GM12878 (cell line): ENCODE measurements at regions of chr22 and their contacts with region 1.

Region 1: DNA sequence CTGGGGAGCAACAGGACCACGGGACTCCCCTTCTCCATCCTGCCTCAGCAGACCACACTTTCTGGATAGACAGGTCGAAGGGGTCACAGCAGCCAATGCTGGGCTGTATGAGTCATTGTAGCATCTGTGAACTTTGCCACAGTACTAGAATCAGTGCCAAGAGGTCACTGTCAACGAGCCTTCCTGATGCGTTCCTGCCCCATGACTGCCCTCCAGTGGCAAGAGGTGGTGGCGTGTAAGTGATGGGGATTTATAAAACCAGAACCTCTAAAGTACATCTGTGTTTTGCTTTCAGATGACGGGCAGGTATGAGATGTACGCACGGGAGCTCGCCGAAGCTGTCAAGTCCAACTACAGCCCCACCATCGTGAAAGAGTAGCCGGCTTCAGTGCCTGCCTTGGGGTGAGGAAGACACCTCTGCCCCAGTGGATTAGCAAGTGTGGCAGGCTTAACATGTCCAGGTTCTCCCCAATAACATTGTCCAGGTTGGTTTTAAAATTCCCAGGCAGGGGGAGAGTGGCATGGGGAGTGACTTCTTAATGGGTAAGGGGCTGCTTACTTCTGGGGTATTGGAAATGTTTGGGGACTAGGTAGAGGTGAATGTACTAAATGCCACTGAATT is 29.4 kb downstream of the GUCD1 start:
- DNase-seq: peak; percentile 62
- ATAC-seq: peak; percentile 92
- H3K4me3 ChIP-seq: no peak overlapping the region
- H3K27ac ChIP-seq: no peak overlapping the region
- H3K4me1 ChIP-seq: peaks cover 10% of the 10 kb centered on the region
- H3K27me3 ChIP-seq: no peaks in the 10 kb centered on the region
- CTCF ChIP-seq: peak; percentile 89 to 94 (median 90)
- EP300 ChIP-seq: no peak
- POLR2A ChIP-seq: no peak
- RAD21 ChIP-seq: peak; percentile 96

Region 2: DNA sequence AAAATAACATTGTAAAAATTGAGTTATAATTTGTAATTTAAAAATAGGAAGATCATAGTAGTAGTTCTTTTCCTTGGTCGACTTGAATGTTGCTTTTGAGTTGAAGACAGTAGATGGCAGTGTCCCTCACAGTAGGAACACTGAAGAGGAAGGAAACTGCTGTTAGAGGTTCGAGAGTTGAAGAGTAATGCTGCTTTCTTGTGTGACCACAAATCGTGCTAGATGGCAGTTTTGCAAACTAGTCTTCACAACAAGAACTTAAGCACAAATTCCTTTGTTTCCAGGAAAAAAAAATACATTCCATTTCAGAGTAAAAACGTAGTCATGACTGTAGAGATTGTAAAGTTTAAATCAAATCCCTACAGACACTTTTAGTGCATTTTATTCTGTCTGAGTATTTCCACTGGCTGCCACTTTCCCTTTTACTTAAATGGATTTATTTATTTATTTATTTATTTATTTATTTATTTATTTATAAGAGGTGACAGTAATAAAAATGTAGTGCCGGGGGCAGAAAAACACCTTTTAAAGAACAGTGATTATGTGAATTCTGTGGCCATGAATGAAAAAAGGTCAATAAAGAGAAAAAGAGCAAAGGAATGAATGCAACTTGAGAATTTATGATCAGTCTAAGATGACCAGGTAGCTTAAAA is 200.3 kb before region 1 on chr22:
- CTCF ChIA-PET with region 1: interaction called, 62 read pairs
- POLR2A ChIA-PET with region 1: no interaction called
- RAD21 ChIA-PET with region 1: interaction called, 5 read pairs
- SMC1A ChIA-PET with region 1: interaction called, 13 read pairs
- in situ Hi-C with region 1: loop called (anchors 5 kb)
- intact Hi-C with region 1: loop called (anchors 1 kb)
- DNase-seq: peak; percentile 62
- ATAC-seq: peak; percentile 92
- H3K4me3 ChIP-seq: no peak overlapping the region
- H3K27ac ChIP-seq: peak overlapping the region; percentile 10; the same call in 1 of the 2 replicates
- H3K4me1 ChIP-seq: no peaks in the 10 kb centered on the region
- H3K27me3 ChIP-seq: no peaks in the 10 kb centered on the region
- CTCF ChIP-seq: peak; percentile 70 to 93 (median 75); a peak in 5 of 6 replicates
- EP300 ChIP-seq: no peak
- POLR2A ChIP-seq: no peak
- RAD21 ChIP-seq: peak; percentile 85

Region 3: DNA sequence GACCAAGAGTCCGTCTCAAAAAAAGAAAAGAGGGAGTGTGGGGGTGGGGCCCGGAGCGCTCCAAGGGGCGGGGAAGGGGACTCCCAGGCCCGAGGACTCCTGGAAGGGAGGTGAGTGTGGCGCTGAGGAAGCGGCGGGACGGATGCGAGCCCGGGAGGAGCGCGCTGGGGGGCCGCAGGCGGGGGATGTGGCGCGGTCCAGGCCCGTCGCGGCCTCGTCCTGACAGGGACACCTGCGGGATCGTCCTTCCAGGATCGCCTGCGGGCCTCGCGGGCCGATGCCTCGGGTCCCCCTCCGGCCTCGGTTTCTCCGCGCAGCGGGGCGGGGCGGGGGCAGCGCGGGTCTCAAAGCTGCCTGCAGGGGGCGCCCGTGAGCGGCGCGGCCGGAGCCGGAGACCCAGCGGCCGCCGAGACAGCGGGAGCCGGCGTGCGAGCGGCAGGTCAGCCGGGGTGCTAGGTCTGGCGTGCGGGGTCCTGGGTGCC is 102.0 kb before region 1 on chr22:
- CTCF ChIA-PET with region 1: interaction called, 71 read pairs
- POLR2A ChIA-PET with region 1: interaction called, 8 read pairs
- RAD21 ChIA-PET with region 1: interaction called, 23 read pairs
- SMC1A ChIA-PET with region 1: interaction called, 25 read pairs
- in situ Hi-C with region 1: no loop called
- intact Hi-C with region 1: loop called (anchors 1 kb)
- DNase-seq: no peak
- ATAC-seq: peak; percentile 64
- H3K4me3 ChIP-seq: peak overlapping the region; percentile 77; the same call in 1 of the 2 replicates
- H3K27ac ChIP-seq: no peak overlapping the region
- H3K4me1 ChIP-seq: peaks cover 19% of the 10 kb centered on the region
- H3K27me3 ChIP-seq: no peaks in the 10 kb centered on the region
- CTCF ChIP-seq: peak; percentile 62 to 86 (median 69); a peak in 5 of 6 replicates
- EP300 ChIP-seq: no peak
- POLR2A ChIP-seq: no peak; the same call in 1 of the 2 replicates
- RAD21 ChIP-seq: peak; percentile 73

Region 4: DNA sequence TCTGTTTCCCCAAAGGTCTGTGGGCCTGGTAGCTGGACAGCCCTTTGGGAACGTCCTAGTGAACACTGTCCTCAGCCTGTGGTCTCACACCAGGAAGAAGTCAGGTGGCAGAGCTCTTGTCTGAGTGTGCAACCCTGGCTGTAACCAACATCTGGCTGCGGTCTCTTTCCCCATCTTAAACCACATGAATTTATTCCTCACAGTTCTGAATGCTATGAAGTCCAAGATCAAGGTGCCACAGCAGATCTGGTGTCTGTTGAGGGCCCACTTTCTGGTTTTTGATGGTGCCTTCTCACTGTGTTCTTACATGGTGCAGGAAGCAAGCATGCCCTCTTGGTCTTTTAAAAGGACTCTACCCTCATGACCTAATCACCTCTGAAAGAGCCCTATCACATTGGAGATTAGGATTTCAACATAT is 27.7 kb before region 1 on chr22:
- CTCF ChIA-PET with region 1: interaction called, 213 read pairs
- POLR2A ChIA-PET with region 1: interaction called, 11 read pairs
- RAD21 ChIA-PET with region 1: interaction called, 64 read pairs
- SMC1A ChIA-PET with region 1: interaction called, 113 read pairs
- in situ Hi-C with region 1: no loop called
- intact Hi-C with region 1: no loop called
- DNase-seq: no peak
- ATAC-seq: no peak
- H3K4me3 ChIP-seq: no peak overlapping the region
- H3K27ac ChIP-seq: no peak overlapping the region
- H3K4me1 ChIP-seq: peaks cover 4% of the 10 kb centered on the region
- H3K27me3 ChIP-seq: no peaks in the 10 kb centered on the region; a peak in 1 of 4 replicates
- CTCF ChIP-seq: no peak
- EP300 ChIP-seq: no peak
- POLR2A ChIP-seq: no peak
- RAD21 ChIP-seq: no peak

Region 5: DNA sequence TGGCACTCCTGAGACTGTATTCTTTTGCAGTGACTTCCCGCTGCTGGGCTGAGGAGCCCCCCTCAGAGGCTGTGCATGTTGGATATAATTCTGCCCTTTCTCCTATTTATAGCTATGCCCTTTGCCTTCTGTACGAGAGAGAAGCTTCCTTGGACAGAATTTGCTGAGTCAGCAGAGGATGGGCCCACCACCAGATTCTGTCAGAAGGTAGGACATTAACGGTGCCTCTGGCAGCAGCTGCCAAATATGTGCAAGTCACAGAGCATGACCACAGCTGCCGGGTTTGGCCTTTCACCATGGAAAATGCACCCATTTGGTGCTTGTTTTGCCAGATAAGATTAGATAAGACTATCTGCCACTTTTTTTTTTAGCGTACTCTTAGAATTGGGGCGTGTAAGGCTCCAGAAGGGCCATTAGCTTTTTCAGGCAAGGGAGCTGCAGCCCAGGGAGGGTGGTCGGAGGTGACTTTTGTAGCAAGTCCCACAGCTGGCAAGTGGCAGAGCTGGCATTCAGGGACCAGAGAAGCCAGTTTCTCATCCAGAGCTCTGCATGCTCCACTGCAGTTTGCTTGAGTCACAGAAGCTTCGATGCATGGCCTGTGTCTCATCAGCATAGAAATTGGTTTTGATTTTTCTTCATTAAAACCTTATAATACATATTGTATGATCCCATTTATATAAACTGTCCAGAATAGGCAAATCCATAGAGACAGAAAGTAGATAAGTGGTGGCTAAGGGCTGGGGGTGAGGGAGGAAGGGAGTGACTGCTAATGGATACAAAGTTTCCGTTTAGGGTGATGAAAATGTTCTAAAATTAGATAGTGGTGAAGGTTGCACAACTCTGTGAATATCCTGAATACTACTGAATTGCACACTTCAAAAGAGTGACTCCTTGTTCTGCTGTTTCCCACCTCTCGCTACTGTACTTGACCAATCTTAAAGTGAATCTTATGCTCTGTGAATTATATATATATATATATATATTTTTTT is 14.6 kb before region 1 on chr22:
- CTCF ChIA-PET with region 1: interaction called, 213 read pairs
- POLR2A ChIA-PET with region 1: interaction called, 14 read pairs
- RAD21 ChIA-PET with region 1: interaction called, 64 read pairs
- SMC1A ChIA-PET with region 1: interaction called, 113 read pairs
- in situ Hi-C with region 1: no loop called
- intact Hi-C with region 1: no loop called
- DNase-seq: no peak
- ATAC-seq: peak; percentile 5; the same call in 2 of the 3 replicates
- H3K4me3 ChIP-seq: no peak overlapping the region
- H3K27ac ChIP-seq: peak overlapping the region; percentile 57
- H3K4me1 ChIP-seq: peaks cover 64% of the 10 kb centered on the region
- H3K27me3 ChIP-seq: no peaks in the 10 kb centered on the region
- CTCF ChIP-seq: no peak
- EP300 ChIP-seq: no peak
- POLR2A ChIP-seq: no peak
- RAD21 ChIP-seq: no peak

Region 6: GRCh38 chr22:24580276-24580675 is 54.7 kb after region 1 on chr22:
- CTCF ChIA-PET with region 1: no interaction called
- POLR2A ChIA-PET with region 1: no interaction called
- RAD21 ChIA-PET with region 1: no interaction called
- SMC1A ChIA-PET with region 1: no interaction called
- in situ Hi-C with region 1: no loop called
- intact Hi-C with region 1: no loop called
- DNase-seq: no peak
- ATAC-seq: no peak
- H3K4me3 ChIP-seq: no peak overlapping the region
- H3K27ac ChIP-seq: no peak overlapping the region
- H3K4me1 ChIP-seq: no peaks in the 10 kb centered on the region
- H3K27me3 ChIP-seq: no peaks in the 10 kb centered on the region
- CTCF ChIP-seq: no peak
- EP300 ChIP-seq: no peak
- POLR2A ChIP-seq: no peak
- RAD21 ChIP-seq: no peak

Region 7: GRCh38 chr22:24681236-24681635 is 155.7 kb after region 1 on chr22:
- CTCF ChIA-PET with region 1: no interaction called
- POLR2A ChIA-PET with region 1: no interaction called
- RAD21 ChIA-PET with region 1: no interaction called
- SMC1A ChIA-PET with region 1: no interaction called
- in situ Hi-C with region 1: no loop called
- intact Hi-C with region 1: no loop called
- DNase-seq: no peak
- ATAC-seq: no peak
- H3K4me3 ChIP-seq: no peak overlapping the region
- H3K27ac ChIP-seq: no peak overlapping the region
- H3K4me1 ChIP-seq: no peaks in the 10 kb centered on the region
- H3K27me3 ChIP-seq: peaks cover 0 to 10% of the 10 kb centered on the region in 2 experiments; a peak in 2 of 4 replicates
- CTCF ChIP-seq: no peak
- EP300 ChIP-seq: no peak
- POLR2A ChIP-seq: no peak
- RAD21 ChIP-seq: no peak

Region 8: DNA sequence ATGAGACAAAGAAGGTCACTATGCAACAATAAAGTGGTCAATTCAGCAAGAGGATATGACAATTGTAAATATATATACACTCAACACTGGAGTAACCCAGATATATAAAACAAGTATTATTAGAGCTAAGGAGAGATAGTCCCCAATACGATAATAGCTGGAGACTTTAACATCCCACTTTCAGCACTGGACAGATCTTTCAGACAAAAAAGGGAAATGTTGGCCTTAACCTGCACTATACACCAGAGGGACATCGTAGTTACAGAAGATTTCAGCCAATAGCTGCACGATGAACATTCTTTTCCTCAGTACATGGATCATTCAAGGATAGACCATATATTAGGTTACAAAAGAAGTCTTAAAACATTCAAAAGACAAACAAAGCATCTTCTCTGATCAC is 219.1 kb after region 1 on chr22:
- CTCF ChIA-PET with region 1: no interaction called
- POLR2A ChIA-PET with region 1: no interaction called
- RAD21 ChIA-PET with region 1: no interaction called
- SMC1A ChIA-PET with region 1: no interaction called
- in situ Hi-C with region 1: no loop called
- intact Hi-C with region 1: no loop called
- DNase-seq: no peak
- ATAC-seq: no peak
- H3K4me3 ChIP-seq: no peak overlapping the region
- H3K27ac ChIP-seq: no peak overlapping the region
- H3K4me1 ChIP-seq: no peaks in the 10 kb centered on the region
- H3K27me3 ChIP-seq: no peaks in the 10 kb centered on the region
- CTCF ChIP-seq: no peak
- EP300 ChIP-seq: no peak
- POLR2A ChIP-seq: no peak
- RAD21 ChIP-seq: no peak

Region 9: DNA sequence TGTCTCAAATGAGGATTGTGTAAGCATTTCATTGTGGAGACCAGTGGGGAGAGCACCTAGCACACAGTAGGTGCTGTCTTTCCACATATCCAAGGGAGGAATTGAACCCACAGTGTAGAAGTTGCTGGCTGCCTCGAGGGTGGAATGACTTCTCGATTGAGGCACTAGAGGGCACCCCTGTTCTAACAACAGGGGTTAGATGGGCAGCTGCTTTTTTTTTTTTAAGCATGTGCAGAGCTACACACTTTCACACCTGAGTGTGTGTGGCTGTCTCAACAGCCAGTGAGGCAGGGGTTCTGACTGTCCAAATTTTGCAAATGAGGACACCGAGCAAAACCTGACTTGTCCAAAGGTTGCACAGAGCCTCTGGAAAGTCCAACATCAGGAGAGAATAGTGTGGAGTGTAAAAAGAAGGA is 555.9 kb after region 1 on chr22:
- CTCF ChIA-PET with region 1: no interaction called
- POLR2A ChIA-PET with region 1: no interaction called
- RAD21 ChIA-PET with region 1: no interaction called
- SMC1A ChIA-PET with region 1: no interaction called
- in situ Hi-C with region 1: no loop called
- intact Hi-C with region 1: no loop called
- DNase-seq: no peak
- ATAC-seq: peak; percentile 51
- H3K4me3 ChIP-seq: no peak overlapping the region
- H3K27ac ChIP-seq: no peak overlapping the region
- H3K4me1 ChIP-seq: peaks cover 34% of the 10 kb centered on the region
- H3K27me3 ChIP-seq: no peaks in the 10 kb centered on the region
- CTCF ChIP-seq: peak; percentile 60 to 77 (median 69)
- EP300 ChIP-seq: no peak
- POLR2A ChIP-seq: no peak
- RAD21 ChIP-seq: peak; percentile 44